Gastrocnemius medialis (tissue), 4 donors: ENCODE measurements at regions of chr10 and their contacts with region 1.

Region 1: DNA sequence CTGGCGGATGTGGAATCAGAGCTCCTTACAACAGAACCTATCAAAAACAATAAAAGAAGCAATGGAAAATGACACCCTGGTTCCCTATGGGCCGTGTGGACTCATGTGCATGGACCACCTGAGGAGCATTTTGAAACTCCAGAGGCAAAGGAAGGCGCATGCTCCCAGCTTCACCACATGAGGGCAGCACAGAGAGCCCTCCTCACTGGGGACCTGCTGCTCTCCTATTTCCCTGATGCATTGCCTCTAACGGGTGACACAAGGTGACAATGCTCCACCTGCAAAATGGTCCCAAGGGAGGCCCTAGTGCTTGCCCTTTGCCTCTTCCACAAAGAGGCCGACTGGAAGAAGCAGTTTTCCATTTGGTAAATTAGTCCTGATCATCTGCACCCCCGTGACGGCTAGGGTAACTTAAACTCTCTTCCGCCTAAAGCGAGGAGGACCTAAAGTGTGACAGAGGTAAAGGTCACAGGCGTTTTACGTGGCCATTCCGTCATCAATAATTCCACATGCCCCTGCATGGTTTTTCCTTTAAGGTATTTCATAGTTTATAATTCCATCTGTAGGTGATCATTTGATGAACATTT is 67.7 kb downstream of the GPAM start:
- DNase-seq: peak in 1 of 2 donors; percentile 23
- ATAC-seq: peak; percentile 47 to 81
- H3K4me3 ChIP-seq: no peak overlapping the region
- H3K27ac ChIP-seq: no peak overlapping the region
- H3K4me1 ChIP-seq: no peaks in the 10 kb centered on the region
- H3K27me3 ChIP-seq: no peaks in the 10 kb centered on the region
- CTCF ChIP-seq: peak; percentile 41 to 77 (median 59)
- POLR2A ChIP-seq: no peak

Region 2: GRCh38 chr10:112314822-112315474 is 199.1 kb after region 1 on chr10:
- in situ Hi-C with region 1: no loop called
- intact Hi-C with region 1: loop called (anchors 2 kb)
- DNase-seq: peak; percentile 52 to 53
- ATAC-seq: peak; percentile 76 to 87
- H3K4me3 ChIP-seq: no peak overlapping the region
- H3K27ac ChIP-seq: no peak overlapping the region
- H3K4me1 ChIP-seq: no peaks in the 10 kb centered on the region
- H3K27me3 ChIP-seq: no peaks in the 10 kb centered on the region
- CTCF ChIP-seq: peak; percentile 62 to 93 (median 78)
- POLR2A ChIP-seq: no peak